PC-9 (cell line): ENCODE measurements at regions of chr7 and their contacts with region 1.

Region 1: GRCh38 chr7:76314042-76314721 is 11.7 kb downstream of the HSPB1 start:
- DNase-seq: peak; percentile 76 to 96
- H3K4me3 ChIP-seq: no peak overlapping the region
- H3K27ac ChIP-seq: no peak overlapping the region
- H3K4me1 ChIP-seq: peaks cover 21% of the 10 kb centered on the region
- H3K27me3 ChIP-seq: no peaks in the 10 kb centered on the region
- CTCF ChIP-seq: peak; percentile 99

Region 2: GRCh38 chr7:76069238-76069638 is 244.9 kb before region 1 on chr7:
- CTCF ChIA-PET with region 1: no interaction called
- POLR2A ChIA-PET with region 1: no interaction called
- intact Hi-C with region 1: loop called (anchors 1 kb)
- DNase-seq: peak; percentile 81 to 93
- H3K4me3 ChIP-seq: no peak overlapping the region
- H3K27ac ChIP-seq: no peak overlapping the region
- H3K4me1 ChIP-seq: peaks cover 11% of the 10 kb centered on the region
- H3K27me3 ChIP-seq: no peaks in the 10 kb centered on the region
- CTCF ChIP-seq: peak; percentile 70

Region 3: DNA sequence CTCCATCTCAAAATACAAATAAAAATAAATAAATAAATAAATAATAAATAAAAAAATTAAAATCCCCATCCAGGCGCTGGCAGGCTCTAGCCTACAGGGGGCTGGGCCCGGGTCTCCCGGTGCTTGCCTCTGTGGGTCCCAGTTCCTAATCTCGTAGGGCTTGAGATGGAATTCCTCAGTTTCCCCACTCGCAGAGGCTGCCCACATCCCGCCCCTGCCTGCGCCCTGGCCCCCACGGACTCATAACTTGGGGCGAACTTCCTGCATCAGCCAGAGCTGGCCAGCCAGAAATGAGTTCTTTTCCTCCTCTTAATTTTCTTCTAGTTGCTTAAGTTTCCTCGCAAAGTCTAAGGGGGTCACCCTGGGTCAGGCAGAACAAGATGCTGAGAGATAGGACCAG is 134.5 kb before region 1 on chr7:
- CTCF ChIA-PET with region 1: interaction called, 5 read pairs
- POLR2A ChIA-PET with region 1: no interaction called
- intact Hi-C with region 1: loop called (anchors 1 kb)
- DNase-seq: no peak
- H3K4me3 ChIP-seq: no peak overlapping the region
- H3K27ac ChIP-seq: no peak overlapping the region
- H3K4me1 ChIP-seq: no peaks in the 10 kb centered on the region
- H3K27me3 ChIP-seq: no peaks in the 10 kb centered on the region
- CTCF ChIP-seq: no peak

Region 4: DNA sequence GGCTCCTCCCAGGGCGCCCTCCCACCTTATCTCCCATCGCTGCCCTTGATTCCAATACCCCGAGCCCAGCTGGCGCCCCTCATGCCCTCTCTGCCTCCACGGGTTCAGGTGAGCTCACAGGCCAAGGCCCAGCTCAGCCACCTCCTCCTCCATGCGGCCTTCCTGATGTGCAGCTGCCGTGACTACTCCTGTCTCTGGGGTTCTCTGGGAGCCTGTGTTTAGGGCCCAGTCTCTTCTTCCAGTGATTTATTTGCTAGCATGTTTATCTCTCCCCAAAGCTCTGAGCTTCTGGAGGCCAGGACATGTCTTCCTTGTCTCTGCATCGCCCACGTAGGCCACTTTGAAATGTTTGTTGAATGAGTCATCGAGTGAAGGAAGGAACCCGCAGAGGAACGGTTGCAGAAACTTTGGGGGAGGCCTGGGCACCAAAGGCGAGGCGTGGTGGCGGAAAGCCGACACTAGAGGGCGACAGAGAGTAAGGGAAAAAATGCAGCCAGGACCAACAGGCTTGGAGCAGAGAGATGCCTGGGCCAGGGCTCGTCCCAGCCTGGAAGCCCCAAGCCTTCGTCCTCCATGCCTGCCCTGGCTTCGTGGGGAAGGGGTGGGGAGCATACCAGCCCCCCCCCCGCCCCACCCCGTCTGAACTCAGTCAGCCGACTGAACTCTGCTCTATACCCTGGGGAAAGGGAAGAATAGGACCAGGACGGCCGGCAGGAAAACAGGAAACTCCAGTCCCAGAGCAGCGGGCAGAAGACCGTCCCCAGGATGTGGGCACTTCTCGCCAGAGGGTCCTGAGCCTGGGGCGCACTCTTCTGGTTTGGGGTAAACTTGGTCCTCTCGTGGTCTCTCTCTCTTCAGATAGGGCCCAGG is 22.6 kb before region 1 on chr7:
- CTCF ChIA-PET with region 1: interaction called, 13 read pairs
- POLR2A ChIA-PET with region 1: no interaction called
- intact Hi-C with region 1: loop called (anchors 1 kb)
- DNase-seq: peak; percentile 97 to 100
- H3K4me3 ChIP-seq: peak overlapping the region; percentile 57
- H3K27ac ChIP-seq: peak overlapping the region; percentile 93
- H3K4me1 ChIP-seq: peaks cover 60% of the 10 kb centered on the region
- H3K27me3 ChIP-seq: no peaks in the 10 kb centered on the region
- CTCF ChIP-seq: peak; percentile 97

Region 5: GRCh38 chr7:76340617-76341131 is 26.5 kb after region 1 on chr7:
- CTCF ChIA-PET with region 1: interaction called, 13 read pairs
- POLR2A ChIA-PET with region 1: no interaction called
- intact Hi-C with region 1: loop called (anchors 2 kb)
- DNase-seq: peak in 1 of 2 experiments; percentile 41
- H3K4me3 ChIP-seq: no peak overlapping the region
- H3K27ac ChIP-seq: peak overlapping the region; percentile 84
- H3K4me1 ChIP-seq: peaks cover 63% of the 10 kb centered on the region
- H3K27me3 ChIP-seq: no peaks in the 10 kb centered on the region
- CTCF ChIP-seq: no peak

Region 6: DNA sequence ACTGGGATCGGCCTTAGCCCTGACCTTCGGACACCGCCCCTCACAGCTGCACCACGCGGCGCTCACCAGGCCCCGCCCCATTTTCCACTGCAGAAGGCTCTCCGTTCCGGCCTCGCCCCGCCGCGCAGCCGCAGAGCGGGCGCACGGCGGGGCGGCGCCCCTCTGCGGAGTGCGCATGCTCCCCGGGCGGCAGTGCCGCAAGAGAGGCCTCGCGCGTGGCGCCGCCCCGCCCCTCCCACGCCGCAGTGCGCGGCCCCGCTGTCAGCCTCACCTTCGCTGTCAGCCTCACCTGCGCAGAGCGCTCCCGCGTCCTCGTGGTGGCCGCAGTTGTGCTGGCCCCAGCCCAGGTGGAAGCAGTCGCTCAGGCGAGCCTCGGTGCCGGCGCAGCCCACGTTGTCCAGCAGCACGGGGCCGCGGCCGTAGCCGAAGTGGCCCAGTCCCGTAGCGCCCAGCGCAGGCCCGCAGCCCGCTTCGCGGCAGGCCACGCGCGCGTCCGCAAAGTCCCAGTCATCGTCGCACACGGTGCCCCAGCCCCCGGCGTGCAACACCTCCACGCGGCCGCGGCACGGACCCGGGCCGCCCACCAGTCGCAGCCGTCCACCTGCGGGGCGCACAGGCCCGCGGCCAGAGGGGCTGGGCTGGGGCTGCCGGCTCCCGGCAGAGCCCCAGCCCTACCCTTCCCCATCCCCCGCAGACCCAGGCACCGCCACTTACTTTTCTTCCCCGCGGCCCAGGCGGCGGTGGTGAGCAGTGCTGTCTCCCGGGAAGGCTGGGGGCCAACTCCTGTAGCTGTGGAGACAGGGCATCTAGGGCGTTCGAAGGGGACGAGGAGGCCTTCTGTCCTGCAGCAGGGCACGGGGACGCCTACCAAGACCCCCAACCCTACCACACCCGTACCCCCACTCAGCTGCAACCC is 79.2 kb after region 1 on chr7:
- CTCF ChIA-PET with region 1: no interaction called
- POLR2A ChIA-PET with region 1: no interaction called
- intact Hi-C with region 1: no loop called
- DNase-seq: peak; percentile 82 to 96
- H3K4me3 ChIP-seq: peak overlapping the region; percentile 91
- H3K27ac ChIP-seq: peak overlapping the region; percentile 37
- H3K4me1 ChIP-seq: peaks cover 18% of the 10 kb centered on the region
- H3K27me3 ChIP-seq: no peaks in the 10 kb centered on the region
- CTCF ChIP-seq: no peak

Region 7: DNA sequence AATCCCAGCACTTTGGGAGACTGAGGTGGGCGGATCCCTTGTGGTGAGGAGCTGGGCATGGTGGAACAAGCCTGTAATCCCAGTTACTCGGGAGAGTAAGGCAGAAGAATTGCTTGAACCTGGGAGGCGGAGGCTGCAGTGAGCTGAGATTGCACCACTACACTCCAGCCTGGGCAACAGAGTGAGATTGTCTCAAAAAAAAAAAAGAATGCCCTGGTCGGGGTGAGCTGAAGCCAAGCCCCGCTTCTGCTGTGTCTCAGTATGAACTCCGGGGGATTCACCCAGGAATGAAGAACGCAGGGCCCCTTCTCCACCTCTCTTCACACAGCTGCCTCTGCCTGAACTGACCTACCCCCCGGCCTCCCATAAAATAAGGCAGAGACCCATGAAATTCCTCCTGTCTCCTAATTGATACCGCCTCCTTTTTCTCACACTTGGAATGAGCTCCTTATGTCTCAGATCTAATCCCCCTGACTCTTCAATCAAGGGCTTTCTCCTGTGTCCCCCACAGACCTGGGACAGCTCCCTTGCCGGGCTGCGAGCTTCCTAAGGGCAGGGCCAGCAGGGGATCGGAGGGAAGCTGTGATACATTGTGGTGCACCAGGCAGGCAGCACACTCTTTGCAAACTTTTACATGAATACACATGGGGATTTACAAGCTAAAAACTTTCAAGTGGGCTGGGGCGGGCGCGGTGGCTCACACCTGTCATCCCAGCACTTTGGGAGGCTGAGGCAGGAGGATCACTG is 109.7 kb after region 1 on chr7:
- CTCF ChIA-PET with region 1: no interaction called
- POLR2A ChIA-PET with region 1: interaction called, 10 read pairs
- intact Hi-C with region 1: loop called (anchors 1 kb)
- DNase-seq: no peak
- H3K4me3 ChIP-seq: no peak overlapping the region
- H3K27ac ChIP-seq: peak overlapping the region; percentile 78
- H3K4me1 ChIP-seq: peaks cover 48% of the 10 kb centered on the region
- H3K27me3 ChIP-seq: no peaks in the 10 kb centered on the region
- CTCF ChIP-seq: no peak